ENCODE measurements at regions of chr5 and their contacts with region 1.

Region 1: GRCh38 chr5:14727428-14727865 is 62.9 kb downstream of the OTULIN start:
- DNase-seq: peak; percentile 53
- ATAC-seq: peak; percentile 65
- H3K4me3 Mint-ChIP-seq: no peak overlapping the region
- H3K27ac Mint-ChIP-seq: no peak overlapping the region
- H3K4me1 Mint-ChIP-seq: peaks cover 12% of the 10 kb centered on the region
- H3K27me3 Mint-ChIP-seq: no peaks in the 10 kb centered on the region
- CTCF ChIP-seq: peak; percentile 98

Region 2: DNA sequence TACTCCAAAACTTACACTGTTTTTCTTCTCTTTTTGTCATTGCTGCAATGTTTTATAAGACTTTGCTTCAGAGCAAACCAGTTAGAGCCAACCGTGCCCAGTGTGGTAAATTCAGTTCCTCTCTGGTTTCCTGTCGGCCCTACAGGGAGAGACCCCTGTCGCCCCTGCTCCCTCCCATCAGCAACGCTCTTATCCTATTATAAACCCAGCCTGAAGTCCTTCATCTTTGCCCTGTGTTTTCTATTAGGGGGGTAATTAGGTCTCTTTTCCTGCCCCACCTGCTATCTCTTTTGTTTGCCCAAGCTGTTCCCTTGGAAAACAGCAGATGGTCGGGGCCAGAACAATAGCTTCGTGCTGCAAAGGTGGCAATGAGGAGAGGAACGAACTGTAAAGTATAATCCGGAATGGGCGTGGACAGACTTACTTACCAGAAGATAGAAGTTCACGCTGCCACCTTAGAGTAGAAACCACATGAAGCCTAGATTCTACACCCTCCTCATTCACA is 167.3 kb before region 1 on chr5:
- CTCF ChIA-PET with region 1: no interaction called
- POLR2A ChIA-PET with region 1: no interaction called
- intact Hi-C with region 1: no loop called
- DNase-seq: no peak
- ATAC-seq: peak; percentile 67
- H3K4me3 Mint-ChIP-seq: peak overlapping the region; percentile 68
- H3K27ac Mint-ChIP-seq: peak overlapping the region; percentile 47
- H3K4me1 Mint-ChIP-seq: peaks cover 20% of the 10 kb centered on the region
- H3K27me3 Mint-ChIP-seq: peaks cover 10% of the 10 kb centered on the region
- CTCF ChIP-seq: no peak

Region 3: DNA sequence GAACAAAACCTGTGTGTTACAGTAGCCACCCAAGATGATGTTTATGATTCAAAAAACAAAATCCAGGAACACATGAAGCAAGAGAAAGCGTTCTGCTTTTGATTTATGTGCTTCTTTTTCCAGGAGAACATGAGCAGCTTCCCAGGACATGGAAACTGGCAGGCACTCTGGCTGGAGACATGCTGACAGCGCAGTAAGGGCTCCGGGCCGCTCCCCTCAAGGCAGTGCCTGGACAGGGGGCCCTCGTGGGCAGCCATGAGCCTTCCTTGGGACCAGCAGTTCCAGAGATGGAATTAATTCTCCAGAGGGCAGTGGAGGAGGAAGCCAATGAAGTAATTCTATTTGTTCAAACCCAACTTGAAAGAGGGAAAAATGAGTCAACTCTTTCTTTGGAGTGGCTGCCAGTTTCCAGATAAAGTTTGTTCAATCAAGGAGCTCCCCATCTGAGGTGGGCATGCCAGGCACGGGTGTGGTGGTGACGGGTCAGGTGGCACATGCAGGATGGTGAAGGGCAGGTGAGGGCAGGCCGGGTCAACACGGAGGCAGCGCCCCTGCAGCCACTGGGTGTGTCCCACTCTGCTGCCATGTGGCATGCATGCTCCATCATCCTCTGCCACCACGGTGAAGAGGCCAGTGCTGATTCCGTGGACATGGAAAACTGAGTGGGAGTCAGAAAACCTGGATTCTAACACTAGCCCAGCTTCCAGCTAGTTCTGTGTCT is 20.9 kb after region 1 on chr5:
- CTCF ChIA-PET with region 1: no interaction called
- POLR2A ChIA-PET with region 1: no interaction called
- intact Hi-C with region 1: no loop called
- DNase-seq: no peak
- ATAC-seq: no peak
- H3K4me3 Mint-ChIP-seq: no peak overlapping the region
- H3K27ac Mint-ChIP-seq: no peak overlapping the region
- H3K4me1 Mint-ChIP-seq: peaks cover 30% of the 10 kb centered on the region
- H3K27me3 Mint-ChIP-seq: no peaks in the 10 kb centered on the region
- CTCF ChIP-seq: no peak

Region 4: GRCh38 chr5:14809369-14810155 is 82.1 kb after region 1 on chr5:
- CTCF ChIA-PET with region 1: no interaction called
- POLR2A ChIA-PET with region 1: interaction called, 3 read pairs
- intact Hi-C with region 1: loop called (anchors 5 kb)
- DNase-seq: peak; percentile 47
- ATAC-seq: peak; percentile 95
- H3K4me3 Mint-ChIP-seq: peak overlapping the region; percentile 79
- H3K27ac Mint-ChIP-seq: peak overlapping the region; percentile 92
- H3K4me1 Mint-ChIP-seq: peaks cover 48% of the 10 kb centered on the region
- H3K27me3 Mint-ChIP-seq: no peaks in the 10 kb centered on the region
- CTCF ChIP-seq: no peak

Region 5: DNA sequence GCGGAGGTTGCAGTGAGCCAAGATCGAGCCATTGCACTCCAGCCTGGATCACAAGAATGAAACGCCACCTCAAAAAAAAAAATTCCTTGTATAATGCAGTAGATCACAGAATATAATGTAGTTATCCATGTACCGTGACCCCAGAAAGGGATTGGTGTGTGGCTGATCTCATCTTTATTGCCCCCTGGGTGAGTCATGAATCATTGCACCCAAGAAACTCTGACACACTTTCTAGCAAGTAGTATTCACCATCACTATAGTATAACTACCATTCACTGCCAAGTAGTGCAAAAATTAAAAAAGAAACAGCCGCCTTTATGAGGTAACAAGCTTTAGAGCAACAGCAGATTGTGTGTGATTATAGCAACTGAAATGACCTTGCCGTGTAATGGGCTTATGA is 167.9 kb after region 1 on chr5:
- CTCF ChIA-PET with region 1: no interaction called
- POLR2A ChIA-PET with region 1: no interaction called
- intact Hi-C with region 1: loop called (anchors 1 kb)
- DNase-seq: no peak
- ATAC-seq: no peak
- H3K4me3 Mint-ChIP-seq: no peak overlapping the region
- H3K27ac Mint-ChIP-seq: no peak overlapping the region
- H3K4me1 Mint-ChIP-seq: no peaks in the 10 kb centered on the region
- H3K27me3 Mint-ChIP-seq: no peaks in the 10 kb centered on the region
- CTCF ChIP-seq: no peak

Region 6: DNA sequence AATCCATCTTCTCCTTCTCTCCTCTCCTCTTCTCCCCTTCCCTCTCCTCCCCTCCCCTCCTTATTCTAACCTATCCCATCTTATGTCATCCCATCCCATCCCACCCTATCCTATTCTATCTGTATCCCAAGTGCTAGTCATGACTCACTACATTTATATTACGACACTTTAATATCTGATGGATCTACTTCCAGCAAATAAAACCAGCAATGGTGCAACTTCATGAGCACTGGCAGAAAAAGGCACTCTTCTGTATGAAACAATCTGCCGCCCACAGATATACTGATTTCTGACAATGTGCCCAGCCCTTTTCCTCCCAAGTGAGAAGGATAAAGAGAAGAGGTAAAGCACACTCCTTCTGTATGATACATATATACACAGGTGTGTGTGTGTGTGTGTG is 230.7 kb after region 1 on chr5:
- CTCF ChIA-PET with region 1: interaction called, 11 read pairs
- POLR2A ChIA-PET with region 1: no interaction called
- intact Hi-C with region 1: loop called (anchors 1 kb)
- DNase-seq: no peak
- ATAC-seq: no peak
- H3K4me3 Mint-ChIP-seq: no peak overlapping the region
- H3K27ac Mint-ChIP-seq: no peak overlapping the region
- H3K4me1 Mint-ChIP-seq: peaks cover 4% of the 10 kb centered on the region
- H3K27me3 Mint-ChIP-seq: peaks cover 6% of the 10 kb centered on the region
- CTCF ChIP-seq: no peak

Region 7: DNA sequence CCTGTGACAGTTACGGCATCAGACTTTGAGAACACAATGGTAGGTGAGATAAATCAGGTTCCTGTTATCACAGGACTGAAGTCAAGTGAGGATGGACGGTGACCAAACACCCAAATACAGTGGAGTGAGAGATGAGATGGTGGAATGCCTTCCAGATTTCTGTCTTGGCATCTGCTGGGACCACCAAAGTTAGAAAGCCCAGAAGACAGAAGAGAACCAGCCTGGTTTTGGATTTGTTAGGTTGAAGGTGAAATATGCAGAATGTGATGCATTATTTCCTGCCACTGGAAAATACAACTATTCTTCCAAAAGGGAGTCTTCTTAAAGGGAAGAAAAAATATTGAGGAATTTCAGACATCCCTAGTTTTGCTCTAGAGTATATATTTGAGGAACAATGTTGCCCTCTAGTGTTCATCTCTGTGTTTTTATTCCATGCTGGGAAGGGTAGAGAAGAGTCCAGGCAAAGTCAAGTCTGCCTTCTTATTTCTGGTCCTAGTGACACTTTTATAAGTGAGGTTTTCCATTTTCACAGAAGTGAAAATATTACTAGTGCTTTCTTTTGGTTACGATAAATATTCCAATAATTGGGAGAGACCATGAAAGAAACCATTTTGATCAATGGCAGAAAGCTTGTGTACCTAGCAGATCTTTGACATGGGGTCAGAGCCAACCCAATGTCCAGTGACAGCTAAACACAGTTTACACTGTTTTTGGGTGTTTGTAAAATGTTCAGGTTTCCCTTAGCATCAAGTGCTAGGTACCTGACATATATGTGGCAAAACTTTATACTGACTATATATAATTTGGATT is 286.4 kb after region 1 on chr5:
- CTCF ChIA-PET with region 1: interaction called, 14 read pairs
- POLR2A ChIA-PET with region 1: no interaction called
- intact Hi-C with region 1: loop called (anchors 1 kb)
- DNase-seq: no peak
- ATAC-seq: peak; percentile 40
- H3K4me3 Mint-ChIP-seq: no peak overlapping the region
- H3K27ac Mint-ChIP-seq: no peak overlapping the region
- H3K4me1 Mint-ChIP-seq: no peaks in the 10 kb centered on the region
- H3K27me3 Mint-ChIP-seq: peaks cover 7% of the 10 kb centered on the region
- CTCF ChIP-seq: peak; percentile 60